Tibial artery (tissue), 4 donors: ENCODE measurements at regions of chr5 and their contacts with region 1.

Region 1: DNA sequence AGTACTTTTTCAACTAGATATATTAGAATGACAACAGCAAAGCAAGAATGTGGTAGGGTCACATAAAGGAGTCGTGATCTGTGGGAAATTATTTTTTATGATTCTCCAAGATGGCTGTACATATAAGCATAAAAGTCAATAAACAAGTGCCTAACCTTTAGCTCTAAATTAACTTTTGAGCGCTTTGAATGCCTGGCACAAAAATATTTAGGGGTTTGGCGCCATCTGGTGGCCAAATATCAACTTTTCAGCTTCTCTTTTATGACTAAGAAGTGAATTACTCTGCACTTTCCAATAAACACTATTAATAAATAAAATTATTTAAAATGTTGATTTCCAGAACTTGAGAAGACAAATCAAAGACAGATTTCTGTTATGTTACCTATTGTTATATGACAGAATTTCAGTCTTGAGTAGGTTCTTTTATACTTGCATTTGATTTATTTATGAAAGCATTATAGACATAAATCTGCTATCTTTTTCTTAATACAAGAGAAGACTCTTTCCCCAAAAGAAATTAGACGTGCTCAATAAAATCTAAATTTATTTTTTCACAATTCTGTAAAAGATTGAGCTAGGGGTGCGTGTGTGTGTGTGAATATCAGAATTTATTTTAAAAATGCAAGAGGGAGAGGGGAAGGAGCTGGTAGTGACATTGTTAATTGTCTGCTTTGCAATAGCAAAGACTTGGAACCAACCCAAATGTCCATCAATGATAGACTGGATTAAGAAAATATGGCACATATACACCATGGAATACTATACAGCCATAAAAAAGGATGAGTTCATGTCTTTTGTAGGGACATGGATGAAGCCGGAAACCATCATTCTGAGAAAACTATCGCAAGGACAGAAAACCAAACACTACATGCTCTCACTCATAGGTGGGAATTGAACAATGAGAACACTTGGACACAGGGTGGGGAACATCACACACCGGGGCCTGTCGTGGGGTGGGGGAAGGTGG is 36.7 kb upstream of the ARRDC3 start:
- DNase-seq: peak; percentile 40 to 69
- H3K4me3 ChIP-seq: no peak overlapping the region
- H3K27ac ChIP-seq: no peak overlapping the region
- H3K4me1 ChIP-seq: no peaks in the 10 kb centered on the region
- H3K27me3 ChIP-seq: no peaks in the 10 kb centered on the region
- CTCF ChIP-seq: peak; percentile 76

Region 2: DNA sequence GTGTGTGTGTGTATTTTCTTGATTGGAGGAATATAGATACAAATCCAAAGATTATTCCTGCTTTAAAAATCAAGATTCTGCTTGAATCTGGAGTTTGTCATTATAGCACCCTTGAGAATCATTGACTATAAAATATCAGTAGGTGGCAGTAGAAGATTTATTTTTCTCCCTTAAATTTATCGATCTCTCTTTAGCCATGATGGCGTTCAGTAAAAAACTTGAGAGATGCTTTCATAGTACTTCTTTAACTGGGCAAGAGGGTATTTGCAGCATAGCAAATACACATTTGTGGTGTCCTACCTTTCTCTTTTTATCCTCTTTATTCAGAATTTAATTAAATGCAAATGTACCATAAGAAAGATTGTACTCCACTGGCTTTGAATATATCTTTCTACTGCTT is 553.5 kb before region 1 on chr5:
- intact Hi-C with region 1: loop called (anchors 5 kb)
- DNase-seq: no peak
- H3K4me3 ChIP-seq: no peak overlapping the region
- H3K27ac ChIP-seq: no peak overlapping the region
- H3K4me1 ChIP-seq: peaks cover 0 to 16% (median 0%) of the 10 kb centered on the region in 4 donors
- H3K27me3 ChIP-seq: no peaks in the 10 kb centered on the region
- CTCF ChIP-seq: peak; percentile 45 to 65

Region 3: DNA sequence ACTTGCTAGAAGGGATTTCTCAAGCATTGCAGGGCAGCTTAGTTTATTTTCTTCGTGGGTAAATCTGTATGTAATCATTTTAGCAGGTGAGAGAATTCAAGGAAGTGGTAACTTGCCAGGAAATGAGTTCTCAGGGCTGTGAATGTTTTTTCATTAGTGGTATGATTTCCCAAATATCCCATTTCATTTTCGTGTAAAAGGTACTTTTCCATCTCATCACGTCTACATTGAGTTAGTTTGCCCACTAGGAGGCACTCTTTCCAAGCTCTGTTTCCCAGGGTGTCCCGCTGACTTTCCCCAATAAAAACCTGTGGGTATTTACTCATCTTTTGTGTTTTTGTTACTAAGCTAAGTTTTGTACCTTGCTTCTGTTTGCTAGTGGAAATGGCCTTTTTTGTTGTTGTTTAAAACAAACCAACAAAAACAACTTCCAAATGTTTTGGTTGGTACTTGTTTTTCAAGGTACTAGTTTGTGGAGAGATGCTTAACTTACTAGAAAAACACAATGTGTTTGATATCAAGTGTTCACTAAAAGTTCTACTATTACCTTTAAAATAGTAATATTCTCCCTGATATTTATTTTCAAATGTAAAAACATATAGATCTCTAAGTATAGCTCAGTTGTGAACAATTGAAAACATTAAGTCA is 487.7 kb before region 1 on chr5:
- intact Hi-C with region 1: loop called (anchors 10 kb)
- DNase-seq: peak in 1 of 2 donors; percentile 22
- H3K4me3 ChIP-seq: no peak overlapping the region
- H3K27ac ChIP-seq: no peak overlapping the region
- H3K4me1 ChIP-seq: peaks cover 0 to 9% (median 3%) of the 10 kb centered on the region in 4 donors
- H3K27me3 ChIP-seq: no peaks in the 10 kb centered on the region
- CTCF ChIP-seq: peak; percentile 73 to 76

Region 4: DNA sequence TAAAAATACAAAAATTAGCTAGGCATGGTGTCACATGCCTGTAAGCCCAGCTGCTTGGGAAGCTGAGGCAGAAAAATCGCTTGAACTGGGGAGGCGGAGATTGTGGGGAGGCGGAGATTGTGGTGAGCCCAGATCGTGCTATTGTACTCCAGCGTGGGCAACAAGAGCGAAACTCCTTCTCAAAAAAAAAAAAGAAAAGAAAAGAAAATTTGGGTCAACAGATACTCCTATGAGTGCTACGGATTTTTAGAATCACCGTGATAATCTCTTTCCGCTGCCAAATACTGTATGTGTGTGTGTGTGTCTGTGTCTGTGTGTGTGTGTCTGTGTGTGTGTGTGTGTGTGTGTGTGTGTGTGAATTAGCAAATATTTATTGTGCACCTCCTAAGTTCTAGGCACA is 101.1 kb before region 1 on chr5:
- intact Hi-C with region 1: no loop called
- DNase-seq: no peak
- H3K4me3 ChIP-seq: no peak overlapping the region
- H3K27ac ChIP-seq: no peak overlapping the region
- H3K4me1 ChIP-seq: peaks cover 0 to 12% (median 7%) of the 10 kb centered on the region in 4 donors
- H3K27me3 ChIP-seq: no peaks in the 10 kb centered on the region
- CTCF ChIP-seq: no peak